Endothelial cell of umbilical vein (primary cell): ENCODE measurements at regions of chr15 and their contacts with region 1.

Region 1: GRCh38 chr15:97566961-97567360 is 393.5 kb upstream of the ARRDC4 start:
- DNase-seq: peak; percentile 97
- H3K4me3 ChIP-seq: no peak overlapping the region
- H3K27ac ChIP-seq: peak overlapping the region; percentile 42
- H3K4me1 ChIP-seq: peaks cover 18% of the 10 kb centered on the region
- H3K27me3 ChIP-seq: no peaks in the 10 kb centered on the region
- CTCF ChIP-seq: no peak
- POLR2A ChIP-seq: no peak

Region 2: DNA sequence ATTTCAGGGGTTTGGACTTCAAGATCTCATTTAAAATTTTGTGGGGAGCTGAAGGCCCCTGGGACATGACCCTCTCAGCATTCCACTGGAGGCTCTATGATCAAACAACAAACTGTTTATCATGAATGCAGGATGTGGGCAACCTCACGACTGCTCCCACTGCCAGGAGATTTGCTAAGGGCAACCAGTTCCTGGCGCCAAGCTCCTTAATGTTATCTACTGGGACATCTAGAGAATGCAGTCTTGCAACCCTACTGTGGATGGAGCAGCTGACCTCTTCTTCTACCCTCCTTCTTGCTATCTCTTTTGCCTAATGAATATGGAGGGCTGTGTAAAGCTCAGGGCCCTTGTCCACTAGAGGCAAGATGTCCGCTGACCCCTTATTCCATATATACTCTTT is 461.5 kb before region 1 on chr15:
- CTCF ChIA-PET with region 1: no interaction called
- POLR2A ChIA-PET with region 1: no interaction called
- dilution Hi-C with region 1: no loop called
- intact Hi-C with region 1: no loop called
- DNase-seq: no peak
- H3K4me3 ChIP-seq: no peak overlapping the region
- H3K27ac ChIP-seq: no peak overlapping the region
- H3K4me1 ChIP-seq: no peaks in the 10 kb centered on the region
- H3K27me3 ChIP-seq: no peaks in the 10 kb centered on the region
- CTCF ChIP-seq: no peak
- POLR2A ChIP-seq: no peak

Region 3: GRCh38 chr15:97706059-97706458 is 139.1 kb after region 1 on chr15:
- CTCF ChIA-PET with region 1: no interaction called
- POLR2A ChIA-PET with region 1: no interaction called
- dilution Hi-C with region 1: no loop called
- intact Hi-C with region 1: no loop called
- DNase-seq: no peak
- H3K4me3 ChIP-seq: no peak overlapping the region
- H3K27ac ChIP-seq: no peak overlapping the region
- H3K4me1 ChIP-seq: no peaks in the 10 kb centered on the region
- H3K27me3 ChIP-seq: no peaks in the 10 kb centered on the region
- CTCF ChIP-seq: no peak
- POLR2A ChIP-seq: no peak

Region 4: GRCh38 chr15:97759363-97759762 is 192.4 kb after region 1 on chr15:
- CTCF ChIA-PET with region 1: no interaction called
- POLR2A ChIA-PET with region 1: no interaction called
- dilution Hi-C with region 1: no loop called
- intact Hi-C with region 1: loop called (anchors 1 kb)
- DNase-seq: peak; percentile 62
- H3K4me3 ChIP-seq: no peak overlapping the region
- H3K27ac ChIP-seq: no peak overlapping the region
- H3K4me1 ChIP-seq: peaks cover 4% of the 10 kb centered on the region
- H3K27me3 ChIP-seq: peaks cover 4 to 18% of the 10 kb centered on the region in 2 experiments
- CTCF ChIP-seq: no peak
- POLR2A ChIP-seq: no peak